Testis (tissue), 5 donors: ENCODE measurements at regions of chr15 and their contacts with region 1.

Region 1: GRCh38 chr15:79322945-79323344 is 12.0 kb downstream of the TMED3 start:
- DNase-seq: no peak
- H3K4me3 ChIP-seq: no peak overlapping the region
- H3K27ac ChIP-seq: no peak overlapping the region
- H3K4me1 ChIP-seq: no peaks in the 10 kb centered on the region
- H3K27me3 ChIP-seq: no peaks in the 10 kb centered on the region
- CTCF ChIP-seq: no peak
- POLR2A ChIP-seq: no peak

Region 2: GRCh38 chr15:79381593-79381992 is 58.6 kb after region 1 on chr15:
- intact Hi-C with region 1: no loop called
- DNase-seq: no peak
- H3K4me3 ChIP-seq: no peak overlapping the region
- H3K27ac ChIP-seq: no peak overlapping the region
- H3K4me1 ChIP-seq: peaks cover 3% of the 10 kb centered on the region
- H3K27me3 ChIP-seq: no peaks in the 10 kb centered on the region
- CTCF ChIP-seq: no peak
- POLR2A ChIP-seq: no peak

Region 3: DNA sequence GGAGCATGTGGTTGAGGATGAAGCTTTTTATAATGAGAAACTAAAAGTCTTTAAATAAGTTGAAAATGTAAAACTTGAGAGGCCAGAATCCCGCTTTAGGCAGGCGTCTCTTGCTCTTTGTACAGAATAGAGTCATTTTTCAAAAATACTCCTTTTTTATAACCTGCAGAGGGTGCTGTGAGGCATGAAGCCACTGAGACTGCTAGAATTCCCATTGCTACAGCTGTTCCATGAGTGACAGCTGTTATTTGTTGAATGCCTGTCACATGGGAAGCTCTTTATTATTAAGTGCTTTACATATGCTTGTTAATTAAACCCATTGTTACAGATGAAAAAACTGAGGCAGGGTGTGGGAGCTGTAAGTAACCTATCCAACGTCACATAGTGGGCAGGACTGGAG is 127.7 kb after region 1 on chr15:
- intact Hi-C with region 1: no loop called
- DNase-seq: no peak
- H3K4me3 ChIP-seq: no peak overlapping the region
- H3K27ac ChIP-seq: no peak overlapping the region
- H3K4me1 ChIP-seq: no peaks in the 10 kb centered on the region
- H3K27me3 ChIP-seq: no peaks in the 10 kb centered on the region
- CTCF ChIP-seq: no peak
- POLR2A ChIP-seq: no peak

Region 4: DNA sequence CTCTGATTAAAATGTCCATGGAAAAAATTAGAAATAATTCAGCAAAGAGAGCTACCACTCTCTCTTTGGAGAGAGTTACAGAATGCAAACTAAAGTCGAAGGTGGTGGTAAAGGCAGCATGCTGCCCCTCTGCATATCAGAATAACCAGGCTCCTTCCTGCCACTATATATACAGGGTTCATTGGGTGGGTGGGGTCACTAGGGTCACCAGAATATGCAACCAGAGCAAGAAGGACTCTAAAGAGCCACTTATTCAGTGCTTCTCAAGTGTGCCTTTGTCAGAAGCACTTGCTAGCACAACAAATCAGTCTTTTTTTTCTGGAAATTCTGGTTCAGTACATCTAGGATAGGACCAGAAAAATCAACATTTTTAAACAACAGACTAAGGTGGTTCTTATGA is 503.9 kb after region 1 on chr15:
- intact Hi-C with region 1: loop called (anchors 5 kb)
- DNase-seq: no peak
- H3K4me3 ChIP-seq: no peak overlapping the region
- H3K27ac ChIP-seq: no peak overlapping the region
- H3K4me1 ChIP-seq: no peaks in the 10 kb centered on the region
- H3K27me3 ChIP-seq: no peaks in the 10 kb centered on the region
- CTCF ChIP-seq: no peak
- POLR2A ChIP-seq: no peak